ENCODE measurements at regions of chr18 and their contacts with region 1.

Region 1: DNA sequence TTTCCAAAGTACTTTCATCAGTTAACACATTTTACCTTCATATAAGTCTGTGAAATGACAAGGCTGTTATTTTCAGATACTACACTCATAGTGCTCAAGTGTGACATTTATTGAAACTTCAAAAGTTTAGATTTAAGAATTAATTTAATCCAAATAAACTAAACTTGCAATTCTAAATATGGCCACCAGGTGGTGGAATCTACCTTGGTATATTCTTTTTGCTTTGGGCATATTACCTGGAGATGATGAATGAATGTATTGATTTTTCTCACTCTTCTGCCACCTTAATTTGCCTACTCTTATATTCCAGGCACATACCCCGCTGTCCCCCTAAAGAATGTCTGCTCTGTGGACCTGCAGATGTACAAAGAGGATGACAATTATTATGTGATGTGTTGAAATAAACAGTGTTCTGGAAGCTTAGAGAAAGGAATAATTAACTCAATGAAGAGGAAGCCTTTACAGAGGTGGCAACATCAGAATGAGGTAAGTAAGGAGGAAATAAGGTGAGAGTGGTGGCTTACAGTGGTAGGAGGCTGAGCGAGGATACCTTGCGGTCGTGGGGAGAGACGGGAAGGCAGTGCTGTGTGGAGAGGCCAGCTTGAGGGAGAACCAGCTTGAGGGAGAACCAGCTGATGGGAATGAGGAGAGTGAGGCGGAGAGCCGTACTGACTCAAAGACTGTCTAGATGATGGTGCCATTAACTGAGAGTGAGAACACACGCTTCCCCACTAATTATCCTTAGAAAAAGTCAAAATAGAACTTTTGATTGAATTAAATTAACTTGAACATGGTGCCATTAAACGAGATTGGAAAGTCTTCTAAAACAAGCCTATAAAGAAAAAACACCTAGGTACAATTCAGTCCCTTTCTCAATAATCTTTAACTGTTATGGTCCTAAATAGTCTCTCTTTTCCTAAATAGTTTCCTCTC is 179.5 kb downstream of the CELF4 start:
- DNase-seq: no peak
- H3K4me3 ChIP-seq: no peak overlapping the region
- H3K27ac ChIP-seq: no peak overlapping the region
- H3K27me3 ChIP-seq: peaks cover 0 to 4% (median 0%) of the 10 kb centered on the region in 45 donors
- CTCF ChIP-seq: peak; percentile 66 to 100 (median 84)

Region 2: DNA sequence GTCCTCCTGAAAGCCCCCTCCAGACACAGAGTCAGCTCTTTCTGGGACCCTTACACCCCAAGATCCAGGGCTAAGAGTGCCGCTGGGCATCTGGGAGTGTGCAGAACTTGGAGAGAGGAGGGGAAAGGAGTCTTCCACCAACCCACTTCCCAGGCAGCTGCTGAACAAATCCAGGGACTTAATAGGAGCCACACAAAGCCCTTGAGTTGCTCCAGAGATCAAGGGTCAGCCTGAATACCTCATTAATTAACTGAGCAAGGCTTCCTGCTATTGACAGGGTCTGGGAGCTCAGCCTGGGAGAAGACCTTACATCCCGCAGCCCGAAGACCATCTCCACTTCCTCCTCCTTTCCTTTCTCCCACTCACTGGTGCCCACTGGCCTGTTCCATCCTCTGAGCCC is 71.2 kb after region 1 on chr18:
- intact Hi-C with region 1: loop called (anchors 2 to 5 kb)
- DNase-seq: no peak
- H3K4me3 ChIP-seq: no peak overlapping the region
- H3K27ac ChIP-seq: peak overlapping the region in 25 of 59 donors; percentile 4 to 81 (median 36)
- H3K27me3 ChIP-seq: no peaks in the 10 kb centered on the region
- CTCF ChIP-seq: no peak

Region 3: GRCh38 chr18:37476182-37476581 is 90.1 kb after region 1 on chr18:
- intact Hi-C with region 1: loop called (anchors 5 kb)
- DNase-seq: peak in 5 of 10 donors; percentile 42 to 71 (median 55)
- H3K4me3 ChIP-seq: no peak overlapping the region
- H3K27ac ChIP-seq: peak overlapping the region in 16 of 59 donors; percentile 8 to 74 (median 36)
- H3K27me3 ChIP-seq: peaks cover 0 to 2% (median 0%) of the 10 kb centered on the region in 45 donors
- CTCF ChIP-seq: peak; percentile 40 to 79 (median 64)

Region 4: GRCh38 chr18:37537868-37538525 is 151.9 kb after region 1 on chr18:
- intact Hi-C with region 1: loop called (anchors 2 to 5 kb)
- DNase-seq: peak; percentile 71 to 88 (median 80)
- H3K4me3 ChIP-seq: peak overlapping the region in 19 of 59 donors; percentile 5 to 48 (median 27)
- H3K27ac ChIP-seq: peak overlapping the region in 41 of 59 donors; percentile 1 to 84 (median 66)
- H3K27me3 ChIP-seq: peaks cover 0 to 10% (median 0%) of the 10 kb centered on the region in 45 donors
- CTCF ChIP-seq: peak; percentile 55 to 91 (median 83)

Region 5: GRCh38 chr18:37639846-37640245 is 253.7 kb after region 1 on chr18:
- intact Hi-C with region 1: no loop called
- DNase-seq: no peak
- H3K4me3 ChIP-seq: no peak overlapping the region
- H3K27ac ChIP-seq: no peak overlapping the region
- H3K27me3 ChIP-seq: no peaks in the 10 kb centered on the region
- CTCF ChIP-seq: no peak

Region 6: GRCh38 chr18:37742436-37742835 is 356.3 kb after region 1 on chr18:
- intact Hi-C with region 1: no loop called
- DNase-seq: no peak
- H3K4me3 ChIP-seq: no peak overlapping the region
- H3K27ac ChIP-seq: no peak overlapping the region
- H3K27me3 ChIP-seq: no peaks in the 10 kb centered on the region
- CTCF ChIP-seq: no peak